ENCODE measurements at regions of chr12 and their contacts with region 1.

Region 1: DNA sequence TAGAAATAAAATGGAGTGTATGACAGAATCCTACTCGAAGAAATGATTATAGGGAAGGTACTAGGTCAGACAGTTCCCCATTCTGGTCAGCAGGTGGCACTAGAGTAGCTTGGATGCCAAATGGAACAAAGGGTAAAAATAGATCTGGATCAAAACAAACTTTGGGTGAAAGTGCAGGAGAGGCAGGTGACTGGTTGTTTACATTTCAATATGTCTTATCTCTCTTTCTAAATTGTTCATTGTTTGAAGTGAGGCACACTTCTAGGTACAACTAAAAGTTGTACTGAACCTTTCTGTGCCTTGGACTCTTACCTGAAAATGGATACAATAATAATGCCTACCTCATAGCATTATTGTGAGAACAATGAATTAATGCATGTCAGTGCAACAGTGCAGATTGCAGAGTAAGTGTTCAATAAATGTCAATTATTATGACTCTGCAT is 62.0 kb upstream of the OSBPL8 start:
- DNase-seq: peak; percentile 65
- CTCF ChIP-seq: peak; percentile 80

Region 2: DNA sequence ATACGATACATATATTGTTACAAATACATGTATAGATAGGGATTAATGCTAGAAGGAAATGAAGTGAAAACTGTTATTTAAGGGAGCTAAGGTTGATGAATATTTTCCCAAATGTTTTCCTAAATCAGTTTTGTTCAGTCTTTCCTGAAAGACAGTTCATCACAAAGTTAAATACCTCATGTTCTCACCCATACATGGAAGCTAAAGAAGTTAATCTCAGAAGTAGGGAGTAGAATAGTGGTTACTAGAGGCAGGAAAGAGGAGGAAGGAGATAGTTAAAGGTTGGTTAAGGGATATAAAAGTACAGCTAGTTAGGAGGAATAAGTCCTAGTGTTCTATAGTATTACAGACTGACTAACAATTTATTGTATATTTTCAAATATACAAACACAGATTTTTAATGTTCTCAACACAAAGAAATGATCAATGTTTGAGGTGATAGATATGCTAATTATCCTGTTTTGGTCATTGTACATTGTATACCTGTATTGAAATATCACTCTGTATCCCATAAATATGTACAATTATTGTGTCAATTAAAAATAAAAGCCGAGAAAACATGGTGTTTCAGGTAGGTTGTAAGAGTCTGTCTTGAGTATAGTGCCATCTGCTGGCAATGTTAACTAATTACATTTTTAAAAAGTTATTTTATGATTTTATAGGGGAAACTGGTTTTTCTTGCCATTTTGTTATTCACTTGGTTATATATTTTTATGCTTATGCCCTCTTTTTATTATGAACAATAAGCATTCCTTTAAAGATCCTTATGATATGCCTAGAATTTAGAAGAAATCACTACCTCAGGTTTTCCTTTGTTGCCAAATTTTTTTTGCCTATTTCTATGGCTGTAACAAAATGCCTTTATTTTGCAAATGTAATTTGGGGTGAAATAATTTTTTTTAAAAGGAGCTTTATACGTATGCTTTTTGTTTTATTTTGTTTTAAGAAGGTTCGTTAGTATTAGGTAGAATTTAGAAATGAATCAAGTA is 169.3 kb after region 1 on chr12:
- in situ Hi-C with region 1: loop called (anchors 10 kb)
- DNase-seq: peak; percentile 39
- CTCF ChIP-seq: peak; percentile 43

Region 3: DNA sequence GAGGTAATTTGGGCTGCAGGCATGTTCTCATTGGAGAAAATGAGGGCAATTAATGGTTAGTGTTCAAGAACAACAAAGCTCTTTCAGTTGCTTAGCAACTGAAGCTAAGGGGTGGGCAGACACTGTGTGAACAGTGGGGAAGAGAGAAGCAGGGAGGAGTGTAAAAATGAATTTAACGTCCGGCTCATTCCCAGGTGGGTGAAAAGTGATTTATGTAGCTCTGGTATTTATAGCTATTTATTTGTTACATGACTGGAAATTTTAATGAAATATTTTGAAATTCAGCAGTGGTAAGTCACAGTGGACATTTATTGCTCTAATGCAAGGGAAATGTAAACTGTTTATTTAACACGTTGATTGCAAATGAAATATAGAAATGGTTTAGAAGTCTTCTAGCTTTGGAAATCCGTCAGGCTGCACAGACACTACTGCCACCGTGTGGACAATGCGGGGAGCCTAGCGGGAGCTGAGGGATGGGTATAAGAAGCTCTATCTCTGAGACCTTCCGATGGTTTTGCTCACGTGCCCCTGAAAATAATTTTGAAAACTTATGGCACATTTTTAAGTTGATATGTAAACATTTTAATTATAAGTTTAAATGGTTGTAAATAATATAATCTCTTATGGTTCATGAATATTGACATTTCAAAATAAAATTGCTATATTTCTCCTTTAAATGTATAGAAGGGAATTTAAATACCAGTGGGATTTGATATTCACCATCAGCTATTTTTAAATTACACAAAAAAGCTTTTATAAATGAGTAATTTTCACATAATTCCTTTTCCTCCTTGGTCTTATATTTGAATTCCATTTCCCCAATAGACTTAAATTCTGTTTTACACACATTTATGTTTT is 389.3 kb after region 1 on chr12:
- in situ Hi-C with region 1: loop called (anchors 25 kb)
- DNase-seq: peak; percentile 69
- CTCF ChIP-seq: peak; percentile 90